K562 (cell line): ENCODE measurements at regions of chr20 and their contacts with region 1.

Region 1: GRCh38 chr20:43448748-43449535 is 8.8 kb upstream of the SRSF6 start:
- DNase-seq: peak; percentile 61 to 75 (median 66)
- ATAC-seq: peak; percentile 75
- H3K4me3 ChIP-seq: no peak overlapping the region
- H3K27ac ChIP-seq: no peak overlapping the region
- H3K4me1 ChIP-seq: peaks cover 0 to 3% of the 10 kb centered on the region in 2 experiments; a peak in 3 of 5 replicates
- H3K27me3 ChIP-seq: no peaks in the 10 kb centered on the region
- CTCF ChIP-seq: peak; percentile 76 to 91 (median 78)
- EP300 ChIP-seq: no peak
- POLR2A ChIP-seq: no peak
- RAD21 ChIP-seq: peak; percentile 84 to 90

Region 2: GRCh38 chr20:43537921-43538877 is 89.3 kb after region 1 on chr20:
- CTCF ChIA-PET with region 1: no interaction called
- POLR2A ChIA-PET with region 1: interaction called, 3 read pairs
- in situ Hi-C with region 1: no loop called
- intact Hi-C with region 1: loop called (anchors 5 kb)
- DNase-seq: peak; percentile 75 to 87 (median 82)
- ATAC-seq: peak; percentile 94
- H3K4me3 ChIP-seq: no peak overlapping the region
- H3K27ac ChIP-seq: peak overlapping the region; percentile 65
- H3K4me1 ChIP-seq: peaks cover 18 to 24% of the 10 kb centered on the region in 2 experiments; a peak in 4 of 5 replicates
- H3K27me3 ChIP-seq: no peaks in the 10 kb centered on the region
- CTCF ChIP-seq: peak; percentile 81 to 97 (median 86)
- EP300 ChIP-seq: peak; percentile 94
- POLR2A ChIP-seq: no peak
- RAD21 ChIP-seq: peak; percentile 80 to 91

Region 3: GRCh38 chr20:43691928-43692524 is 243.1 kb after region 1 on chr20:
- CTCF ChIA-PET with region 1: interaction called, 24 read pairs
- POLR2A ChIA-PET with region 1: interaction called, 3 read pairs
- in situ Hi-C with region 1: loop called (anchors 10 kb)
- intact Hi-C with region 1: loop called (anchors 1 kb)
- DNase-seq: peak; percentile 70 to 79 (median 74)
- ATAC-seq: peak; percentile 79
- H3K4me3 ChIP-seq: no peak overlapping the region
- H3K27ac ChIP-seq: no peak overlapping the region
- H3K4me1 ChIP-seq: peaks cover 17 to 18% of the 10 kb centered on the region in 2 experiments; a peak in 4 of 5 replicates
- H3K27me3 ChIP-seq: no peaks in the 10 kb centered on the region
- CTCF ChIP-seq: peak; percentile 79 to 86 (median 79)
- EP300 ChIP-seq: no peak
- POLR2A ChIP-seq: no peak
- RAD21 ChIP-seq: peak; percentile 78 to 81

Region 4: GRCh38 chr20:43749734-43750294 is 300.9 kb after region 1 on chr20:
- CTCF ChIA-PET with region 1: no interaction called
- POLR2A ChIA-PET with region 1: no interaction called
- in situ Hi-C with region 1: no loop called
- intact Hi-C with region 1: loop called (anchors 1 kb)
- DNase-seq: peak; percentile 75 to 86 (median 85)
- ATAC-seq: peak; percentile 95
- H3K4me3 ChIP-seq: no peak overlapping the region
- H3K27ac ChIP-seq: no peak overlapping the region
- H3K4me1 ChIP-seq: peaks cover 5 to 6% of the 10 kb centered on the region in 2 experiments; a peak in 3 of 5 replicates
- H3K27me3 ChIP-seq: peaks cover 9 to 37% of the 10 kb centered on the region in 2 experiments
- CTCF ChIP-seq: peak; percentile 92 to 96 (median 93)
- EP300 ChIP-seq: no peak
- POLR2A ChIP-seq: no peak
- RAD21 ChIP-seq: peak; percentile 92 to 95

Region 5: DNA sequence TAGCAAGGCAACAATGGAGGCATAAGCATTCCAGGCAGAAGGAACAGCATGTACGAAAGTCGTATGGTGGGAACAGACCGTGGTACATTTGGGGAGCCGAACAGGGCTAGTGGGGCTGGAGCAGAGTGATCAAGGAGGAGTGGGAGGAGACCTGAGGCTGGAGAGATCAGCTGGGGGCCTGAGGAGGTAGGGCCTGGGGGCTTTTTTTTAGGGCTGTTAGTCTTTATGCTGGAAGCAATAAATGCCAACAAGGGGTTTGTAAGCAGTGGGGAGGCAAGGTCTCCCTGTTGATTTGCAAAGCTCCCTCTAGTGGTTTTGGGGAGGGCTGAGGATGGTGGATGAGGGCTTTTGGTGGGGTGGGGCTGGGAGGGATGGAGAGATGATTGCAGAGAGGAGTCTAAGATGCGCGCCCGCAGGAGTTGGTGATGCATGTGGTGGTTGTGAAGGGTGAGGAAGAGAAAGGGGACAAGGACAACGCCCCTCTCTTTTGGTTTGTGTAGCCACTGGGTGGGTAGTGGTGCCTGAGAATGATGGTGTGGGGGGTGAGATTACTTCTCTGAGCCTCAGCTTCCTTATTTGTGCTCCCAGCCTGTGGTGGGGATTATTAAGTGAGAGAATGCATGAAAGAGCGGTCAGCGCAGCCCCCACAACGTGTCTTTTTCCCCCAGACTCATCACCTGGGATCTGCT is 391.6 kb after region 1 on chr20:
- CTCF ChIA-PET with region 1: no interaction called
- POLR2A ChIA-PET with region 1: no interaction called
- in situ Hi-C with region 1: no loop called
- intact Hi-C with region 1: loop called (anchors 10 kb)
- DNase-seq: peak in 3 of 4 experiments; percentile 20 to 71 (median 59)
- ATAC-seq: peak; percentile 96
- H3K4me3 ChIP-seq: no peak overlapping the region
- H3K27ac ChIP-seq: no peak overlapping the region
- H3K4me1 ChIP-seq: no peaks in the 10 kb centered on the region
- H3K27me3 ChIP-seq: peaks cover 0 to 12% of the 10 kb centered on the region in 2 experiments; a peak in 3 of 5 replicates
- CTCF ChIP-seq: peak; percentile 53 to 66 (median 64)
- EP300 ChIP-seq: no peak
- POLR2A ChIP-seq: no peak
- RAD21 ChIP-seq: peak in 1 of 2 experiments; percentile 38; a peak in 2 of 4 replicates

Region 6: GRCh38 chr20:44080646-44081267 is 631.8 kb after region 1 on chr20:
- CTCF ChIA-PET with region 1: interaction called, 12 read pairs
- POLR2A ChIA-PET with region 1: no interaction called
- in situ Hi-C with region 1: loop called (anchors 5 kb)
- intact Hi-C with region 1: loop called (anchors 1 kb)
- DNase-seq: peak; percentile 78 to 81 (median 79)
- ATAC-seq: peak; percentile 96
- H3K4me3 ChIP-seq: no peak overlapping the region
- H3K27ac ChIP-seq: no peak overlapping the region
- H3K4me1 ChIP-seq: no peaks in the 10 kb centered on the region
- H3K27me3 ChIP-seq: peaks cover 7 to 45% of the 10 kb centered on the region in 2 experiments
- CTCF ChIP-seq: peak; percentile 88 to 97 (median 94)
- EP300 ChIP-seq: no peak
- POLR2A ChIP-seq: no peak
- RAD21 ChIP-seq: peak; percentile 94 to 97